HCT116 (cell line): ENCODE measurements at regions of chr16 and their contacts with region 1.

Region 1: GRCh38 chr16:27918755-27919154 is 144.8 kb downstream of the GSG1L start:
- DNase-seq: peak; percentile 29
- ATAC-seq: no peak
- H3K4me3 ChIP-seq: no peak overlapping the region
- H3K27ac ChIP-seq: no peak overlapping the region
- H3K4me1 ChIP-seq: peaks cover 3 to 13% of the 10 kb centered on the region in 2 experiments; a peak in 2 of 4 replicates
- H3K27me3 ChIP-seq: peaks cover 50% of the 10 kb centered on the region
- CTCF ChIP-seq: no peak
- POLR2A ChIP-seq: no peak
- RAD21 ChIP-seq: no peak

Region 2: GRCh38 chr16:27795992-27796614 is 122.7 kb before region 1 on chr16:
- CTCF ChIA-PET with region 1: no interaction called
- POLR2A ChIA-PET with region 1: no interaction called
- RAD21 ChIA-PET with region 1: no interaction called
- intact Hi-C with region 1: loop called (anchors 10 kb)
- DNase-seq: peak; percentile 4
- ATAC-seq: peak; percentile 66; the same call in 1 of the 2 replicates
- H3K4me3 ChIP-seq: no peak overlapping the region
- H3K27ac ChIP-seq: no peak overlapping the region
- H3K4me1 ChIP-seq: no peaks in the 10 kb centered on the region
- H3K27me3 ChIP-seq: peaks cover 31% of the 10 kb centered on the region; the same call in 1 of the 2 replicates
- CTCF ChIP-seq: no peak
- POLR2A ChIP-seq: no peak
- RAD21 ChIP-seq: no peak